Activated naive CD4-positive, alpha-beta T cell treated with anti-CD3 and anti-CD28 coated beads for 36 hours (primary cell): ENCODE measurements at regions of chr20 and their contacts with region 1.

Region 1: DNA sequence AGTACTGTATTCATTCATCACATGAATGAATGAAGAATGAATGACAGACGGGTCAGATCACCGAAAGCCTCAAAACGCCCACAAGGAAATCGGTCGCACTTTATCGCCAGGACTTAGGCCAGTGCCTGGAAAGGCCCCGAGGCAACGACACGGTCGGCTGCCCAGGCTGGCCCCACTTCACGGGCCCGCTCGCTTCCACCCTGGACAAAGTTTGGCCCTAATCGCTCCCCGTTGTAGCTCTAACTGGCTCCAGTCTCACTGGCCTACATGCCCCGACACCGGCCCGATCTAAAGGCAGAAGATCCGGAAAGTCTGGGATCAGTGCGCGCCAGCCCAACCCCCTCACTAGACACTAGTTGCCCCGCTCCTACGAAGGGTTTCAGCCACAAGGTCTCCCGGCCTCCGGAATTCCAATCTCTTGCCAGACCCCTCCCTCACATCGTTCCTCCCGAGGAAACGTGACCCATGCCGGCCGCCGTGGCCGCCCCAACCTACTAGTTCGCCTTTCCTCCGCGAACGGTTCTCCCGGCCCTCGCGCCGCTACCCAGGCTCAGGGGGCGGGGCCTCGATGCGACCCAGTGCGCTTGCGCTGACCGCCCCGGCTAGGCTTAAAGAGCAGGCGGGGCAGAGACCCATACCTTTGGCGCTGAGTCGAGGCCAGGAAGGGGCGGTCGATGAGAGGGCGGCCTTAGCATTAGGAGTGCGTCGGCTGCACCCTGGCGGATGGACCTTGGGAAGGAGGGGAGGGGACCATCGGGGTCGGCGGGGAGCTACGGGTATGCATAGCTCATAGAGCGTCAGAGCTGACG is at the starts of genes GSS and MYH7B:
- DNase-seq: peak; percentile 99
- H3K4me3 Mint-ChIP-seq: peak within 1 kb of the TSS; percentile 98
- H3K27ac Mint-ChIP-seq: peak within 1 kb of the TSS; percentile 92
- H3K4me1 Mint-ChIP-seq: peaks cover 30% of the 10 kb centered on the region
- H3K27me3 Mint-ChIP-seq: no peaks in the 10 kb centered on the region
- total RNA-seq, gene GSS: 84.3 to 86.0 TPM
- total RNA-seq, gene MYH7B: 0.20 to 0.86 TPM

Region 2: GRCh38 chr20:34825530-34826362 is 129.7 kb before region 1 on chr20 and contains the start of gene NCOA6:
- CTCF ChIA-PET with region 1: no interaction called
- intact Hi-C with region 1: loop called (anchors 1 kb)
- DNase-seq: peak; percentile 88
- H3K4me3 Mint-ChIP-seq: peak within 1 kb of the TSS; percentile 97
- H3K27ac Mint-ChIP-seq: peak within 1 kb of the TSS; percentile 93
- H3K4me1 Mint-ChIP-seq: peaks cover 37% of the 10 kb centered on the region
- H3K27me3 Mint-ChIP-seq: no peaks in the 10 kb centered on the region
- total RNA-seq, gene NCOA6: 13.9 to 14.1 TPM

Region 3: GRCh38 chr20:34891166-34892062 is 64.0 kb before region 1 on chr20:
- CTCF ChIA-PET with region 1: interaction called, 11 read pairs
- intact Hi-C with region 1: loop called (anchors 1 kb)
- DNase-seq: peak; percentile 71
- H3K4me3 Mint-ChIP-seq: peak overlapping the region; percentile 16
- H3K27ac Mint-ChIP-seq: peak overlapping the region; percentile 87
- H3K4me1 Mint-ChIP-seq: peaks cover 48% of the 10 kb centered on the region
- H3K27me3 Mint-ChIP-seq: no peaks in the 10 kb centered on the region

Region 4: DNA sequence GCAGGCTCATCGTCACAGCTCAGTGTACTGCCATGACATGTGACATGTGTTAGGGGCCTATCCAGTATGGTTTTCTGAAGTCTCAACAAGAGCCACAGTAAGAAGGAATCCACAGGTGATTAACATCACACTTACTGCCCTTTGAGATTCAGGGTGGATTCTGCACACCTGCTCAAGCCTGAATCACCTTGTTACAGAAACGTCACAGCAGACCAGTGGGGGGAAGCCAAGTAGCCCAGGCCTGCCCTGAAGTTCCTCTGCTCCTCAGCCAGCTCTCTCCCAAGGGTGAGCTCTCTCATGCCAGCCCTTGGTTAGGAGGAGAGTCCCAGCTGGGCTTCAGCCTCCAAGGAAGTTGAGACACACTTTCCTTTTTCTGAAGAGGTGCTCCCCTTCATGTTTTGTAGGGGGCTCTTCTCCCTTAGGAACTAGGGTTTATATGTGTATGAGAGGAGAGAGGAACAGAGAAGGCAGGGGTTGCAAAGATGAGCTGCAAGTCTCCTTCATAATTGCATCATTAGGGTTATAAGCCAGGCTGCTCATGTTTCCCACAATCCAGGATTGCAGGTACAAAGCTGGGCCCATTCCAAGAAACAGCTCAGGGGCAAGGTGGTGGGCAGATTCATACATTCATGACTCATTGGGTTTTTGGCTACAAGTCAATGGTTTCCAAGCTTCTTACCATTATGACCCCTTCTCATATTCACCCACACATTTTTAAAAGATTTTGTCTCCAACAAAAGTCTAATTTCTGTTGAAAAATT is 11.4 kb before region 1 on chr20:
- CTCF ChIA-PET with region 1: interaction called, 12 read pairs
- intact Hi-C with region 1: no loop called
- DNase-seq: no peak
- H3K4me3 Mint-ChIP-seq: no peak overlapping the region
- H3K27ac Mint-ChIP-seq: peak overlapping the region; percentile 21
- H3K4me1 Mint-ChIP-seq: peaks cover 4% of the 10 kb centered on the region
- H3K27me3 Mint-ChIP-seq: no peaks in the 10 kb centered on the region

Region 5: DNA sequence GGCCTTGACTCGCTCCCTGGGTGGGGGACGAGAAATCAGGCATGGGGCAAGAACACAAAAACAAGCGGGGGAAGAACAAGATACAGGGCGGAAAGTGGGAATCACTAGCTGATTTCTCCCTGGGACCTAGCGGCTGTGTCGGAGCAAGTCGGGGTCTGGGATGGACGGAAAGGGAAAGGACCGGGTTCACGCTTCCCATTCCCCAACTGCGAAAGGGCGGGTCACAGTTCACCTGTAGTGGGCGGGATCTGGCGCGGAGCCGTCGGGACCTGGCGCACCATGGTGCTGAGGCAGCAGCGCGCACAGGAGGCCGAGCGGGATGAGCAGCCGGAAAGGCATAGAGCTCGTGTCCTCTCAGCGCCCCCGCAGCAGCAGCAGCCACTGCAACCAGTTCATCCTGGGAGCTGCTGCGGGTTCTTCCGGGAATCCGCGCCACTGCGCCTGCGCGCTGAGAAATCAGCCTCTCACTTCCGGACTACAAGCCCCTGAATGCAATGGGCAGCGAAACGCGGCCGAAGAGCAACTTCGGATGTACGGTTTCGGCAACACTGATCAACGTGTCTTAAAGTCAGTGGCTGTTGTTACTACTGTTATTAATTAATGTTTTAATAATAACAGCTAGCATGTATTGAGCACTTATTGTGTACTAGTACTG is 191.6 kb after region 1 on chr20 and contains the start of gene EDEM2:
- CTCF ChIA-PET with region 1: interaction called, 3 read pairs
- intact Hi-C with region 1: loop called (anchors 5 kb)
- DNase-seq: peak; percentile 95
- H3K4me3 Mint-ChIP-seq: peak within 1 kb of the TSS; percentile 91
- H3K27ac Mint-ChIP-seq: peak within 1 kb of the TSS; percentile 86
- H3K4me1 Mint-ChIP-seq: peaks cover 23% of the 10 kb centered on the region
- H3K27me3 Mint-ChIP-seq: no peaks in the 10 kb centered on the region
- total RNA-seq, gene EDEM2: 15.5 to 15.8 TPM

Region 6: DNA sequence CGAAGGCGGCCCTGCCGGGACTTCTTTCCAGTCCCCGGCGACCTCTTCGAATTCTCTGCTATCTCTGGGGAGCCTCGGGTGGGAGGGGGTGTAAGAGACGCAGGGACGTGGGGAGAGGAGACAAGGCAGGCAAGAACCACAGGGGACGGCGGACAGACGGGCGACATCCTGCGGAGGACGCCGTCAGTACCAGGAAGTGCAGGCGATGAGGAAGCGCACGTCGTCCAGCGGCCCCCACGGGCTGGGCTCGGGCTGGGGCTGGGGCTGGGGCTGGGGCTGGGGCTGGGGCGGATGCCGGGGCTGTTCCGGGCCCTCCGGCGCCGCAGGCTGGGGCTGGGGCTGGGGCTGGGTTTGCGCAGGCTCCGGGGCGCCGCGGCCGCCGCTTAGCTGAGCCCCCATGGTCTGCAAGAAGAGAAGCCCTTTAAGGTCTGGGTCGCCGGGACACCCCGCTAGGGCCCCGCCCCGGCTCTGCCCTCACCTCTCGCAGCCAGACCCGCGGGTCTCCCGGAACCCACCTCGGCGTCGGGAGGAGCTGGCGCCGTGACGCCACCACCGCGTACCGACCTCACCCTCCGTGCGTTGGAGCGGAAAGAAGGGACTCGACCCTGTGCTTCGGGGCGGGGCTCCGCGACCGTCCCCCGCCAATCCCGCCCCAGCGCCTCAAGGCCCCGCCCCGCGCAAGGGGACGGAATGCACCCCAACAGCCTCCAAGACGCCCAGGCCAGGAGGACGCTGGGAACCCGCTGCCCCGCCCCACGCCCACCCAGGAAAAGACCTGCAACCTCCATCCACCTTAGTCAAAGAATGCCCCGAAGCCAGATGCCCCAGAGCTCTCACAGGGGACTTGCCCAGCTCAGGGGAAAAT is 322.3 kb after region 1 on chr20 and contains the start of gene MMP24OS:
- CTCF ChIA-PET with region 1: no interaction called
- intact Hi-C with region 1: loop called (anchors 5 kb)
- DNase-seq: peak; percentile 87
- H3K4me3 Mint-ChIP-seq: peak within 1 kb of the TSS; percentile 97
- H3K27ac Mint-ChIP-seq: peak within 1 kb of the TSS; percentile 96
- H3K4me1 Mint-ChIP-seq: peaks cover 16% of the 10 kb centered on the region
- H3K27me3 Mint-ChIP-seq: no peaks in the 10 kb centered on the region
- total RNA-seq, gene MMP24OS: 26.4 to 29.2 TPM